Stomach (tissue), 19 donors: ENCODE measurements at regions of chr7 and their contacts with region 1.

Region 1: DNA sequence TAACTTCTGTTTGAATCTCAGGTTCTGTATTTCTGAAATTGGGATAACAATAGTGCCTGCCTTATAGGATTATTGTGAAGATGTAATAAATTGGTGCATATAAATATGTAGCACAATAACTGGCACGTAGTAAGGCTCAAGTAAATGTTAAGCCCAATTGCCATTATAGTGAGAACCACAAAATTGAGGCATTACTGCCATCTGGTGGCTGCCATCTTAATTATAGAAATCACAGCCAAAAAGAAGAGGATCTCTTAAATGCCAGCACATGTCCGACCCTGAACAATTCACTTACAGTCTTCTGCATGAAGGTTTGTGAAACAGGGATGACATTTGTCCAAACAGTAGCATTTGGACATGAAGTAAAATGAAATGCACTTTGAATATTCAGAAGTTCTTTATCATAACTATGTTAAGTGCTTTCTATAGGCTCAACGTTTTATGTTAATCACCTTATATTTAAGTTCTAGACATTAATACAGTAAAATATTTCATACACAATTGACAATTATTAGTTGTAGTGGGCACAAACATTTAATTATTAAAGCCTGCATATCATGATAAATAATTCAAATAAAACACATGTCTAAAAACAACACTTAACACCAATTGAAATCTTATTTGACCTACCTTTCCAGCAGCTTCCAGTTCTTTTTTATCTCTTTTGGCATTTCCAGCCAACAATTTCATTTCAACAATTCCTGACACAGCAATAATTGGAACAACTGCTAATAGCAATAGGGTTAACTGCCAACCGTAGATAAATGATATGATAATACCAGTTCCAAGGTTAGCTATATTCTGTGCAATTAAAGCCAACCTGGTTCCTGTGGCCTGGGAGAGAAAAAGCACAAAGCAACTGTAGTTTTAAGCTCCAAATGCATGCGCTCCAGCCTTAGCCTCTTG is 58.5 kb downstream of the ABCB4 start:
- DNase-seq: peak; percentile 67 to 83
- H3K4me3 ChIP-seq: no peak overlapping the region
- H3K27ac ChIP-seq: no peak overlapping the region
- H3K4me1 ChIP-seq: peaks cover 0 to 7% (median 0%) of the 10 kb centered on the region in 4 donors
- H3K27me3 ChIP-seq: no peaks in the 10 kb centered on the region
- CTCF ChIP-seq: peak in 5 of 7 experiments; percentile 38 to 75 (median 68)
- EP300 ChIP-seq: no peak
- POLR2A ChIP-seq: no peak

Region 2: DNA sequence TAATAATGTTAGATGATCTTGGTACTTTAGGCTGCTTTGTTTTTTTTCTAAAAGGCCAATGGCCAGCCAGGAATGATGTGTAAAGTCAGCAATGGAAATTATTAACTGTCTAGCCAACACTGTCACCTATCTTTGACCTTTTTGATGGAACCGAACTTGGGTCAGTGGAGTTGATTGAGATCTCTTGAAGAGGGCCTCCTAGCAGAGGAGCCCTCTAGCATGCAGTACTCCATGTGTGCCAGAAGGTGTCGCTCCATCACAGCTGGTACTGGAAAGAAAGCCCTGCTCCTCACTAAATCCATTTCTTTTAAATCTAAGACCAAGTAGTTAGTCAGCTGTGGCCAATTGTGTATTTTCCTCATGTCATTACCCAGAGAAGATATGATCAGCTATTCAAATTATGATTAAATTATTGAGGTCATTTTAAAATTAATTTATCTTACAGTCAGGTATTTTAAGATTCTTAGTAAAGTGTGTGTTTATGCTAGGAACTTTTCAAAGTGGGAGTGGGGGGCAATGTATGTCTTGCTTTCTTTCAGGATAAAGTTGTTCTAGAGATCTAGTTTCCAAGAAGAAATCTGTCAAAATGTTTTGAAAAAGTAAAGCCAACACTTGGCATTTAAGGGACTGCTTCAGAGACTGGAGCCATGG is 104.6 kb before region 1 on chr7:
- intact Hi-C with region 1: loop called (anchors 5 kb)
- DNase-seq: peak; percentile 58 to 83
- H3K4me3 ChIP-seq: no peak overlapping the region
- H3K27ac ChIP-seq: no peak overlapping the region
- H3K4me1 ChIP-seq: peaks cover 0 to 3% (median 0%) of the 10 kb centered on the region in 4 donors
- H3K27me3 ChIP-seq: no peaks in the 10 kb centered on the region
- CTCF ChIP-seq: peak in 6 of 7 experiments; percentile 73 to 99 (median 92)
- EP300 ChIP-seq: no peak
- POLR2A ChIP-seq: no peak